ENCODE measurements at regions of chr21 and their contacts with region 1.

Region 1: GRCh38 chr21:16308269-16308668 is 578.5 kb downstream of the USP25 start:
- DNase-seq: no peak
- ATAC-seq: peak; percentile 29 to 65 (median 44)
- H3K4me3 ChIP-seq: peak overlapping the region; percentile 57
- H3K27ac ChIP-seq: peak overlapping the region; percentile 48
- H3K4me1 ChIP-seq: peaks cover 10% of the 10 kb centered on the region
- H3K27me3 ChIP-seq: no peaks in the 10 kb centered on the region
- CTCF ChIP-seq: no peak

Region 2: GRCh38 chr21:16211339-16212303 is 96.6 kb before region 1 on chr21:
- intact Hi-C with region 1: loop called in 1 of 2 experiments (anchors 5 kb)
- DNase-seq: no peak
- ATAC-seq: peak; percentile 69 to 89 (median 78)
- H3K4me3 ChIP-seq: peak overlapping the region; percentile 65
- H3K27ac ChIP-seq: peak overlapping the region; percentile 79
- H3K4me1 ChIP-seq: peaks cover 19% of the 10 kb centered on the region
- H3K27me3 ChIP-seq: no peaks in the 10 kb centered on the region
- CTCF ChIP-seq: no peak

Region 3: GRCh38 chr21:16250273-16250672 is 58.0 kb before region 1 on chr21:
- intact Hi-C with region 1: loop called in 1 of 2 experiments (anchors 10 kb)
- DNase-seq: no peak
- ATAC-seq: peak in 1 of 4 donors; percentile 28
- H3K4me3 ChIP-seq: no peak overlapping the region
- H3K27ac ChIP-seq: no peak overlapping the region
- H3K4me1 ChIP-seq: peaks cover 3% of the 10 kb centered on the region
- H3K27me3 ChIP-seq: no peaks in the 10 kb centered on the region
- CTCF ChIP-seq: no peak

Region 4: GRCh38 chr21:16454399-16454798 is 146.1 kb after region 1 on chr21:
- intact Hi-C with region 1: no loop called
- DNase-seq: no peak
- ATAC-seq: peak in 2 of 4 donors; percentile 47 to 52
- H3K4me3 ChIP-seq: no peak overlapping the region
- H3K27ac ChIP-seq: no peak overlapping the region
- H3K4me1 ChIP-seq: peaks cover 40% of the 10 kb centered on the region
- H3K27me3 ChIP-seq: no peaks in the 10 kb centered on the region
- CTCF ChIP-seq: peak; percentile 37

Measured in psoas muscle (tissue), 8 donors.